ENCODE measurements at regions of chr1 and their contacts with region 1.

Region 1: DNA sequence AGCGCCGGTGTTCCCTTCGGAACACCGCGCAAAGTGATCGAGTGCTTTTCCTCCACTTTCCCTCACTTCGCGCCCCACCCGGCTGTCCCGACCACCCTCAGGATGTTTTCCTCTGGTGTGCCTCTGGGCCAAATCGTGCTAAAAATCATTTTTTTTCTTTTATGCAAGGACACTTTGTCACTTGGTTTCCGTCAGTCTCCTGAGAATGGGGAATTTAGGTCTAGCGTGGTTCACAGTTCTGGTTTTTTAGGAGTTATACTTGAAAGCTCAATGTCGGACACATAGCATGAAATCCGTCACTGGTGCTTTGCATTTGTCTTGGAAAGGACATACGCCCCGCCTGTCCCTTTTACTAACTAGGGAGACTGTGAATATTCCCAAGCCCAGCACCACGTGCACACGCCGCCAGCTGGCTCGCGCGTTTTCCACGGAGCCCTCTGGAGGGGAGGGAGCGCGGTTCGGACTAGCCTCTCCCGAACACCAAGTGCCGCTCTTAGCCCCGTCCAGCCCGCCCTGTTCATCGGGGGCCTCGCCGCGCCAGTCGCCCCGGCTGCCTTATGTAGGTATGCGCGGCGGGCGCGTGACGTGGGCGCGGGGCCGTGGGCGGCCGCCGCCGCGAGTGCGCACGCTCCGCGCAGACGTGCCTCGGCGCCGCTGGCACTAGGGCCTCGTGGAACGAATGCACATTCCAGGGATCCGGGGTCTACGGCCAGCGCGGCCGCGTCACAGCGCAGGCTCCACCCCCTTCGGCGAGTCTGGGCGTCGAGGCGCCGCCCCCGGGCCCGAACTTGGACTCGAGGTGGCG is 572 bp upstream of the IRF2BP2 start:
- DNase-seq: peak; percentile 92 to 95
- ATAC-seq: peak; percentile 42 to 58
- H3K4me3 ChIP-seq: peak overlapping the region; percentile 64
- H3K27ac ChIP-seq: peak overlapping the region; percentile 96
- H3K4me1 ChIP-seq: peaks cover 38% of the 10 kb centered on the region
- CTCF ChIP-seq: no peak; the same call in 2 of the 3 replicates
- EP300 ChIP-seq: no peak; a peak in 1 of 5 replicates
- POLR2A ChIP-seq: peak; percentile 97
- RAD21 ChIP-seq: peak in 1 of 2 experiments; percentile 2; a peak in 1 of 5 replicates

Region 2: DNA sequence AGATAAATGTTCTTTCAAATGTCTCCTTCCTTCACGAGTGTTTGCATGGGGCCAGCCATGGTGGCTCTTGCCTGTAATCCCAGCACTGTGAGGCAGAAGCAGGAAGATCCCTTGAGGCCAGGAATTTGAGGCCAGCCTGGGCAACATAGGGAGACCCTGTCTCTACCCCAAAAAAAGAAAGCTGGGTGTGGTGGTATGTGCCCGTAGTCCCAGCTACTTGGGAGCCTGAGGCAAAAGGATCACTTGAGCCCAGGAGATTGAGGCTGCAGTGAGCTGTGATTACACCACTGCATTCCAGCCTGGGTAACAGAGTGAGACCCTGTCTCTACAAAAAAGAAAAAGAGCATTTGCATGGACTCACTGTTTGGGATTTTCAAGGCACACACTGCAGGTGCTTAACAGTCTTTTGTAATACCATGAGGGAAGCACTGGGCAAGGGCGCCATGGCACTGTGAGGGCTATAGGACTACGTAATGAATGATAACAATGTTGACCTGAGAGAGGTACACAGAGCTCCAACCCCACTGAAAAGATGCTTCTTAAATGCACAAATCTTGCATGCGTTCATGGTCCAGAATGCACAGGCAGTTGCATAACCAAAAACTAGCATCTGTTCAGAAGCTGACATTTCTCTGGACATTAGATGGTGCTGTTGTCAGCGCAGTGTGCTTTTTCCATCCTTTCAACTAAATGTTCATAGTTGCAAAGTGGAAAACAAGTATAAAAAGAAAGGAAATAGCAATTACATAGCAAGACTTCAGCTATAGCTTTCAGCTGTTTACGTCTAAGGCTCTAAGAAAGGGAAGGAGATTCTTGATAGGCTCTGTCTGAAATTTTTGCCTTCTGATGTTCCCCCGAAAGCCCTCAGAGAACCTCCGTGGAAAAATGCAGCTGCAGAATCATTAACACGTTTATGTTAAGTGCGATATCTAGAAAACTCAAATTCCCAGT is 123.8 kb before region 1 on chr1:
- CTCF ChIA-PET with region 1: interaction called, 16 read pairs
- POLR2A ChIA-PET with region 1: interaction called, 6 read pairs
- DNase-seq: peak; percentile 59 to 69
- ATAC-seq: peak; percentile 84 to 86; a peak in 5 of 6 replicates
- H3K4me3 ChIP-seq: no peak overlapping the region
- H3K27ac ChIP-seq: peak overlapping the region in 1 of 2 experiments; percentile 36; a peak in 2 of 6 replicates
- H3K4me1 ChIP-seq: peaks cover 5% of the 10 kb centered on the region; the same call in 1 of the 3 replicates
- CTCF ChIP-seq: peak; percentile 75
- EP300 ChIP-seq: no peak
- POLR2A ChIP-seq: no peak
- RAD21 ChIP-seq: peak; percentile 87 to 91

Region 3: DNA sequence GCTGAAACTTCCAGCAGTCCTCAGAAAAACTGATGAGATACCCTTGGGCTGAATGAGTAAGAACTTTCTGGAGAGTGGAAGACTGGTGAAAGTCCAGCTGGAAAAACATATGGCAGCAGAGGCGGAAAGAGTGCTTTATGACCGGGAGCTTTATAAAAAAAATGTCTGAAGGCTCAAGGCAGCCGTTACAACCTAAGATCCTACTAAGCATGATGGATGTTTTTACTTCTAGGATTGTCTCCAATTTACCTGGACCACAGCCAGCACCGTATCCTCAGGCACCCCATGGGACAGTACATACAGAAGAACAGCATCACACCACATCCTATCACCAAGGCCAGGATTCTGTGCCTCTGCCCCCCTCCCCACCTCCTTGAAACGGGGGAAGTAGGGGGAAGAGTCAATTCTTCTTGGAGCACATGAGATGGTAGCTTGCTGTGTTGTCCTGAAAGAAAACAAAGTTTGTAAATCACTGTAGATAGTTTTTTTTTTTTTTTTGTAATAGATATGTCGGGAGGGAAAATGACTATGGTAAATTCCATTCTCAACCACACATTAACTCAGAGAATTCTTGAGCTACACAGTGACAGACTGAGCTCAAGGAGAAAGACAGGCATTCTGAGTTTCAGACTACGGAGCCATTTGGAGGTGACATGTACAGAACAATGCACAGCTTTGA is 11.2 kb after region 1 on chr1:
- CTCF ChIA-PET with region 1: interaction called, 5 read pairs
- POLR2A ChIA-PET with region 1: interaction called, 10 read pairs
- DNase-seq: no peak
- ATAC-seq: peak in 1 of 2 experiments; percentile 16; a peak in 2 of 6 replicates
- H3K4me3 ChIP-seq: no peak overlapping the region
- H3K27ac ChIP-seq: peak overlapping the region; percentile 1 to 79; a peak in 3 of 6 replicates
- H3K4me1 ChIP-seq: peaks cover 66% of the 10 kb centered on the region
- CTCF ChIP-seq: no peak
- EP300 ChIP-seq: no peak
- POLR2A ChIP-seq: no peak
- RAD21 ChIP-seq: no peak

Region 4: DNA sequence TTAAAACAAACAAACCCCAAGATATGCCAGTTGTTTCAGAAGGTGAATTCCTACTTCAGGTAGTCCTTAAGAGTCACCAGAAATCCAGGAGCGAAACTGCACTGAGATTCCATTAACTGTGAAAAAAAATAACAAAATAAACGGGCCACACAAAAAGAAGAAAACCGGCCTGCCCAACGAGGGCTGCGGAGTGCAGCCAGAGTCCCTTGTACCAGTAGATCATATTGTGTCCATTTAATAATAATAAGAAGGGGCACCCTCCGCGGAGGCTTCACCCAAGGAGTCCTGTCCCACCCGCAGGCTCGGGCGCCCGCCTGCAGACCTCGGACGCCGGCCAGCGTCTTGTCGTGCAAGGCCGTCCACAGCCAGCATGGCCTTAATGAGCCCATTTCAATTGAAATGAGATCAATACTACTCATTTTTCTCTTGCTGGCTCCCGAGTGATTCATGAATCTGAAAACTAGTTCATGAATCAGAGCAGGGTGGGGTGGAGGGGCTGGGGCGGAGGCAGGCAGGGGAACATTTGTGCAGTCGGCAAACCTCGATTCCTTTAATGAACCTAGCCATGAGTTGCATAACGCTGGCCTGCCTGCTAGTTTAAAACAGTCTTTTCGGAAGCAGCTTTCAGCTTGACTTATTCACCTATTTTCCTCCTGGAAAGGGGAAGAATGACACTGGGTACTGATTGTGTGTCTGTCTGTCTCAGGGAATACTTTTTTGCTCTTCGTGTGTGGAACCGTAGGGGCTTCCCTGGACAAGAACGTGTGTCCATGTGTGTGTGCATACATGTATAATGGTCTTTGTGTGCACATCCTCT is 112.6 kb after region 1 on chr1:
- CTCF ChIA-PET with region 1: interaction called, 22 read pairs
- POLR2A ChIA-PET with region 1: interaction called, 171 read pairs
- DNase-seq: peak; percentile 43 to 65
- ATAC-seq: peak; percentile 21 to 24
- H3K4me3 ChIP-seq: peak overlapping the region; percentile 20; the same call in 1 of the 3 replicates
- H3K27ac ChIP-seq: peak overlapping the region; percentile 86 to 87
- H3K4me1 ChIP-seq: peaks cover 62% of the 10 kb centered on the region
- CTCF ChIP-seq: no peak
- EP300 ChIP-seq: no peak; a peak in 1 of 5 replicates
- POLR2A ChIP-seq: no peak
- RAD21 ChIP-seq: no peak; a peak in 1 of 5 replicates

Region 5: GRCh38 chr1:234955107-234955731 is 344.7 kb after region 1 on chr1:
- CTCF ChIA-PET with region 1: interaction called, 3 read pairs
- POLR2A ChIA-PET with region 1: interaction called, 56 read pairs
- DNase-seq: no peak
- ATAC-seq: no peak
- H3K4me3 ChIP-seq: no peak overlapping the region
- H3K27ac ChIP-seq: peak overlapping the region; percentile 93 to 96
- H3K4me1 ChIP-seq: peaks cover 58% of the 10 kb centered on the region
- CTCF ChIP-seq: no peak
- EP300 ChIP-seq: no peak
- POLR2A ChIP-seq: no peak
- RAD21 ChIP-seq: no peak

Region 6: DNA sequence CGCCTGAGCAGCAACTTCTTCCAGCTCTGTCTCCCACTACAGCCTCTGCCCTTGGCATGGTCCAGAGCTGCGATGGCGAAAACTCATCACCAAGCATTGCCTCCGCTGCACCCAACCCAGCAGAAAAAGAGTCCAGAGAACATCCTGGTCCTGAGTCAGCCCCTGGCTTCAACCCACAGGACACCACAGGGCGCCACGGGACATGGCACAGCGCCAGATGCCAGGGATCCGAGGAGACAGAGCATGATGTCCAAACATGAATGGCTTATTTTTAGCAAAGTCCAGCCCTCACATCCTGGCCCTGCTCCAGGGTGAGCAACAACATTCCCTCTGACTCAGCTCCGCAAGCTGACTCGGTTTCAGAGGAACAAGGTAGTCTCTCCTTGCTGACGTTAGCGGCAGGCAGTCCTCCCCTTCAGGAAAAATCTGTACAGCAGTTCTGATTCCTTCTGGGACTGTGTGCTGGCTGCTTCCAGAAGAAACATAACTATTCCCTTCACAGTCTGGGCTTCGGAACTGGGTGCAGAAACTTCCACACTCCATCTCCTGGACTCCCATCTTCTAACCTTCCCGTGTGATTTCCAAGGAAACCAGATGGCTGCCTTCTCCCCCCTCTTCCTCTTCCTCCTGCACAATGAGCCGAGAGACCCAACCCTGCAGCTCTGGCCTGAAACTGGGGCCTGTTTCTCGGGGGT is 386.8 kb after region 1 on chr1:
- CTCF ChIA-PET with region 1: interaction called, 5 read pairs
- POLR2A ChIA-PET with region 1: interaction called, 22 read pairs
- DNase-seq: peak; percentile 98 to 99
- ATAC-seq: peak; percentile 94 to 95
- H3K4me3 ChIP-seq: no peak overlapping the region
- H3K27ac ChIP-seq: peak overlapping the region; percentile 87 to 88
- H3K4me1 ChIP-seq: peaks cover 31% of the 10 kb centered on the region
- CTCF ChIP-seq: no peak
- EP300 ChIP-seq: peak; percentile 84 to 89; a peak in 4 of 5 replicates
- POLR2A ChIP-seq: no peak
- RAD21 ChIP-seq: peak; percentile 16 to 72; a peak in 4 of 5 replicates

Region 7: DNA sequence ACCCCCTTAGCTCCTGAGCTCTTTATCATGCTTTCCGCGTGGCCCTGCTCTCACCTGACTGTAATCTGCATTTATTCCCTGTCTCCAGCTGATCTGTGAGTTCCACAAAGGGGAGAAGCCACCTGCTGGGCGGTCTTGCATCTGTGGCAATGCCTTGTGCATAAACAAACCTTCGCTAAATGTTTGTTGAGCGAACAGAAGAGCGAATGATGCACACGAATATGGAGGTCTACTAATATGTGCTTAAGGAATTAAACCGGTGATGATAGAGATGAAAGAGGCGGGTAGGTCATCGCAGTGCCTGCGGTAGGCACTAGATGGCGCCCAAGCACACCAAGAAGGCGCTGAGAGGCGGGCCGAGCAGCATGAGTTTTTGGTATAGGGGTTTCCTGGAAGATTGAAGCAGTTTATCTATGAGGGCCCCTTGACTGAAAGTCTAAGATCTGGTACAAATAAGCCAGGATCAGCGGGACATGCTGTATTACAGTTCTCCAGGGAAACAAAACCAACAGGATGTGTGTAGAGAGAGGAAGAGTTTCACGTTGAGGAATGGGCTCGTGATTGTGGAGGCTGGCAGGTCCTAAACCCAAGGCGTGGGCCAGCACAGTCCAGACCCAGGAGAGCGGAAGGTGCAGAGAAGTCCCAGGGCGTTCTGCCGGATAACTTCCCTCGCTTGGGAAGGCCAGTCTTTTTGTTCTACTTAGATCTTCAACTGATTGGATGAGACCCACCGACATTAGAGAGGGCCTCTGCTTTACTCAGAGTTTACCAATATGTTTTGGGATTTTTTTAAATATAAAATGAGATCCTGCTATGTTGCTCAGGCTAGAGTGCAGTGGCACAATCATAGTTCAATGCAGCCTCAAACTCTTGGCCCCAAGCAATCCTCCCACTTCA is 483.4 kb after region 1 on chr1:
- CTCF ChIA-PET with region 1: interaction called, 16 read pairs
- POLR2A ChIA-PET with region 1: interaction called, 4 read pairs
- DNase-seq: peak; percentile 75 to 78
- ATAC-seq: peak; percentile 81 to 88
- H3K4me3 ChIP-seq: no peak overlapping the region
- H3K27ac ChIP-seq: peak overlapping the region; percentile 11 to 69; a peak in 4 of 6 replicates
- H3K4me1 ChIP-seq: peaks cover 8% of the 10 kb centered on the region
- CTCF ChIP-seq: peak; percentile 85
- EP300 ChIP-seq: no peak
- POLR2A ChIP-seq: no peak
- RAD21 ChIP-seq: peak; percentile 61 to 76

Measured in A549 (cell line).